ENCODE measurements at regions of chr3 and their contacts with region 1.

Region 1: GRCh38 chr3:108477511-108478147 is 32.8 kb downstream of the MYH15 start:
- DNase-seq: peak; percentile 35
- ATAC-seq: peak; percentile 85
- H3K4me3 Mint-ChIP-seq: no peak overlapping the region
- H3K27ac Mint-ChIP-seq: no peak overlapping the region
- H3K4me1 Mint-ChIP-seq: peaks cover 4% of the 10 kb centered on the region
- H3K27me3 Mint-ChIP-seq: no peaks in the 10 kb centered on the region
- CTCF ChIP-seq: peak; percentile 52

Region 2: DNA sequence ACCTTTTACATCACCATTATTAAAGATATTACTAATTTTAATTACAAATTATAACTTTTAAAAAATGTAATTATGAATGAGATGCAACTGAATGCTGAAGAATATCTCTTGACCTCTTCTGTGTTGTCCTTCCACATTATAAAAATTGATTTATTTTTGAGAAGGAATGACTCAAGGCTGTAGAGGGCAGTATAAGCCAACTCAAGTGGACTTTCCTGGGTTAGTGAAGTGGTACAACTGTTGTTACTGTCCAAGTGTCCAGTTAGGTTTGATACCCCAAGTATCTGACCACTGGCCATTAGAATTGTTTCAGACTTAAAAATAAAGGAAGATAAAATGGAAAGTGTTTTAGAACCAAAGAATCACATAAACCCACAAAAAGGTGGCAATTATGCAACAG is 903.0 kb before region 1 on chr3:
- CTCF ChIA-PET with region 1: no interaction called
- POLR2A ChIA-PET with region 1: no interaction called
- intact Hi-C with region 1: loop called (anchors 10 kb)
- DNase-seq: no peak
- ATAC-seq: no peak
- H3K4me3 Mint-ChIP-seq: no peak overlapping the region
- H3K27ac Mint-ChIP-seq: no peak overlapping the region
- H3K4me1 Mint-ChIP-seq: peaks cover 16% of the 10 kb centered on the region
- H3K27me3 Mint-ChIP-seq: no peaks in the 10 kb centered on the region
- CTCF ChIP-seq: no peak

Region 3: DNA sequence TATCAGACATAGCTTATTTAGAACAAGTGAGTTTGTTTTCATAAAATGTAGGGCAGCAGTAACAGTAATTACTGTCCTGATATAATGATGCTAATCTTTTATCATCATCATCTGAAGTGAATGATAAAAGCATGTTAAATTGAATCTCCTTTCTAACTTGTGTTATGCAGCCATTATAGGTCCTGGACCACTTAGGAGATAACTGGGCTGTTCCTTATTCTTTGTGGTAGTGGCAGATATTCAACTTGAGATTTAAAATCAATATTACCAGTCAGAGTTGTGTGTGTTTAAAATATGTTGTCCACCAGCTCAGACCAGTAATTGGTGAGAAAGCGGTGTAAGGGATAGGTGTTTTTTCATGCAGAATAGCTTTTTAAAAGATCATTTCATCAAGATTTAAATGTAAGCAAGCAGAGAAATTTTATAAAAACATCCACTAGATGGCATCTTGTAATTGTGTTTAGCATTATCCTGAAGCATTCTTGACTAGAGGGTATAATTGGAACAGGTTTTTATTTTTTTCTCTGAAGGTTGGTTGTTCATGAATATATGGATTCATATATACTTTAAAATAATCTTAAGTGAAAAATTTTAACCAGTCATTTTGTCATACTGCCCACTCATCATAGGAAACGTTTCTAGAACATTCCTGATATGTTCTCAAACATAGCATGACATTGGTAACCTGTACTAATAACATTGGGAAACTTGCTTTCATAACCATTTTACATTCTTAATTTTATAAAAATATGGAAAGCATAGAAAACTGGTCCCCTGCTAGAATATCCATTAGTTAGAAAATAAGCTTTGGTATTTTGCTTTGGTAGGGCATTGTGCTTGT is 800.9 kb before region 1 on chr3:
- CTCF ChIA-PET with region 1: interaction called, 11 read pairs
- POLR2A ChIA-PET with region 1: no interaction called
- intact Hi-C with region 1: loop called (anchors 1 kb)
- DNase-seq: no peak
- ATAC-seq: no peak
- H3K4me3 Mint-ChIP-seq: peak overlapping the region; percentile 42
- H3K27ac Mint-ChIP-seq: peak overlapping the region; percentile 67
- H3K4me1 Mint-ChIP-seq: peaks cover 53% of the 10 kb centered on the region
- H3K27me3 Mint-ChIP-seq: no peaks in the 10 kb centered on the region
- CTCF ChIP-seq: no peak

Region 4: GRCh38 chr3:107753480-107753879 is 724.1 kb before region 1 on chr3:
- CTCF ChIA-PET with region 1: no interaction called
- POLR2A ChIA-PET with region 1: no interaction called
- intact Hi-C with region 1: loop called (anchors 2 kb)
- DNase-seq: no peak
- ATAC-seq: no peak
- H3K4me3 Mint-ChIP-seq: no peak overlapping the region
- H3K27ac Mint-ChIP-seq: no peak overlapping the region
- H3K4me1 Mint-ChIP-seq: no peaks in the 10 kb centered on the region
- H3K27me3 Mint-ChIP-seq: no peaks in the 10 kb centered on the region
- CTCF ChIP-seq: no peak

Region 5: GRCh38 chr3:107927361-107928083 is 550.1 kb before region 1 on chr3:
- CTCF ChIA-PET with region 1: interaction called, 17 read pairs
- POLR2A ChIA-PET with region 1: no interaction called
- intact Hi-C with region 1: loop called (anchors 2 kb)
- DNase-seq: peak; percentile 66
- ATAC-seq: peak; percentile 93
- H3K4me3 Mint-ChIP-seq: peak overlapping the region; percentile 86
- H3K27ac Mint-ChIP-seq: peak overlapping the region; percentile 26
- H3K4me1 Mint-ChIP-seq: peaks cover 22% of the 10 kb centered on the region
- H3K27me3 Mint-ChIP-seq: peaks cover 10% of the 10 kb centered on the region
- CTCF ChIP-seq: peak; percentile 97

Region 6: GRCh38 chr3:108062051-108062450 is 415.6 kb before region 1 on chr3:
- CTCF ChIA-PET with region 1: no interaction called
- POLR2A ChIA-PET with region 1: no interaction called
- intact Hi-C with region 1: loop called (anchors 5 kb)
- DNase-seq: no peak
- ATAC-seq: peak; percentile 93
- H3K4me3 Mint-ChIP-seq: peak overlapping the region; percentile 11
- H3K27ac Mint-ChIP-seq: peak overlapping the region; percentile 66
- H3K4me1 Mint-ChIP-seq: peaks cover 81% of the 10 kb centered on the region
- H3K27me3 Mint-ChIP-seq: no peaks in the 10 kb centered on the region
- CTCF ChIP-seq: no peak

Region 7: GRCh38 chr3:108406661-108407206 is 70.9 kb before region 1 on chr3:
- CTCF ChIA-PET with region 1: interaction called, 5 read pairs
- POLR2A ChIA-PET with region 1: interaction called, 4 read pairs
- intact Hi-C with region 1: loop called (anchors 2 kb)
- DNase-seq: no peak
- ATAC-seq: peak; percentile 87
- H3K4me3 Mint-ChIP-seq: peak overlapping the region; percentile 35
- H3K27ac Mint-ChIP-seq: peak overlapping the region; percentile 87
- H3K4me1 Mint-ChIP-seq: peaks cover 28% of the 10 kb centered on the region
- H3K27me3 Mint-ChIP-seq: no peaks in the 10 kb centered on the region
- CTCF ChIP-seq: no peak